ENCODE measurements at regions of chr6 and their contacts with region 1.

Region 1: DNA sequence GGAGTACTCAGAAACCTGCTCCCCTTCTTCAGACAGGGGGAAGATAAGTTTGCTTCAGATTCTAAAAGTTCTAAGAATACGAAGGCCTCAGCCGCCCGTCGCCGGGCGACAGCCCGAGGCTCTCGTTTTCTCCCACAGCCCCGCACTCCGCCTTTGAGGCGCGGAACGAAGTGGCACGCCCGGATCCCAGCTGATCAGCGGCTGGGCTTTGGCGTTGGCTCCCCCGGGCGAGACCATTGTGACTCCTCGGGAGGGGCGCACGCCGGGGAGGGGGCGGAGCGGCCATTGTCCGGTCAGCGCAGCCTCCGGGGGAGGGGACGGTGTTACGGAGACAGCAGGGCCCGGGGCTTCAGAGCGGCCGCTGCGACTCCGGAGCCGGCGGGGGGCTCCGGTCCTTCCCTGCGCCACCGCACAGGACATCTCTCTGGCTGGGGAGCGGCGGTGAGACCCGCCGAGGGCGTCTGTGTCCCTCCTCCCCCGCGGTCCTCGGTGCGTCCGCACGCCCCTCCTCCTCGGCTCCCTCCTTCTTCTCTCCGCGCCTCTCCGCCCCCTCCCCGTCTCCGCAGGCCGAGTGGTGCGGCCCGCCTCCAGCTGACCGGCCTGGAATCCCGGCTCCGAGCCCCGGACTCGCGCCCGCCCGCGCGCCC is at the start of gene ZFAND3:
- DNase-seq: peak; percentile 87 to 96 (median 95)
- ATAC-seq: peak; percentile 90
- H3K4me3 ChIP-seq: peak within 1 kb of the TSS; percentile 85
- H3K4me3 Mint-ChIP-seq: peak within 1 kb of the TSS; percentile 90 to 100 (median 96)
- H3K27ac ChIP-seq: peak within 1 kb of the TSS; percentile 93
- H3K27ac Mint-ChIP-seq: peak within 1 kb of the TSS; percentile 94 to 99 (median 98)
- H3K4me1 ChIP-seq: peaks cover 30 to 31% of the 10 kb centered on the region in 2 donors
- H3K4me1 Mint-ChIP-seq: peaks cover 39 to 66% (median 55%) of the 10 kb centered on the region in 7 donors
- H3K27me3 ChIP-seq: no peaks in the 10 kb centered on the region
- H3K27me3 Mint-ChIP-seq: peaks cover 0 to 29% (median 0%) of the 10 kb centered on the region in 5 donors
- total RNA-seq, gene ZFAND3: 31.7 to 55.0 (median 42.5) TPM

Region 2: DNA sequence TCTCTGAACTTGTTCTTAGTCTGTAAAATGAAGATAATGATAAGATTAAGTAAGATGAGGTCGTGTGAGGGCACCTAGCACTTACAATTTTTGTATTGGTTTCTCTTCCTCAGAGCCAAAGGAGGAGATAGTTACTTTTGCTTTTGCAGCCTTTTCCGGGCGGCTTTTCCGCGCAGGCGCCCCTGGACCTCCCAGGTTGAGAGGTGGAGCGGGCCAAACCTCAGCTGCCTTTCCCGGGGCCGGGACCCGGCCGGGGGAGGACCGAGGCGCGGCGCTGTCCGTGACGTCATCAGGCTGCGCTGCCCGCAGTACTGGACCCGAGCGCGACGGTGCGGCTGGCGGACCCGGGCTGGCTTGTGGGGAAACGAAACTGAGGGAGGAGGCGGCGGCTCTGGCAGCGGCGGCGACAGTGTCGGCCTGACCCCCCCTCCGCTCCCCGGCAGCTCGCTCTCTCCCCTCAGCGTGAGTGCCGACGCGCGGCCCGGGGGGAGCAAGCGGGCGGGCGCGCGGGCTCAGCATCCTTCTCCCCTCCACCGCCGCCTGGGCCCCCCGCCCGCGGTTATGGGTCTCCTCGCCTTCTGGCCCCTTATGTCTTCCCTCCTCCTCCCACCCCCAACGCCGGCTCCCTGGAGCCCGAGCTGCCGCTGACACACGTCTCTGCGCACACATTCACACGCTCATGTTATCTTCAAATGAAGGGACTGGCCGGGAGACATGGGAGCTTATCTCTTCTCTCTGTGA is 386.2 kb before region 1 on chr6 and contains the start of gene CMTR1:
- CTCF ChIA-PET with region 1: no interaction called
- POLR2A ChIA-PET with region 1: interaction called, 4 read pairs
- intact Hi-C with region 1: loop called (anchors 1 kb)
- DNase-seq: peak; percentile 94 to 99 (median 95)
- ATAC-seq: peak; percentile 96
- H3K4me3 ChIP-seq: peak within 1 kb of the TSS; percentile 64
- H3K4me3 Mint-ChIP-seq: peak within 1 kb of the TSS; percentile 83 to 96 (median 94)
- H3K27ac ChIP-seq: peak within 1 kb of the TSS; percentile 94
- H3K27ac Mint-ChIP-seq: peak within 1 kb of the TSS; percentile 92 to 97 (median 96)
- H3K4me1 ChIP-seq: peaks cover 12 to 25% of the 10 kb centered on the region in 2 donors
- H3K4me1 Mint-ChIP-seq: peaks cover 24 to 55% (median 47%) of the 10 kb centered on the region in 7 donors
- H3K27me3 ChIP-seq: no peaks in the 10 kb centered on the region
- H3K27me3 Mint-ChIP-seq: peaks cover 2 to 9% (median 8%) of the 10 kb centered on the region in 5 donors
- total RNA-seq, gene CMTR1: 70.0 to 89.4 (median 71.8) TPM

Region 3: GRCh38 chr6:37456816-37457560 is 362.3 kb before region 1 on chr6:
- CTCF ChIA-PET with region 1: no interaction called
- POLR2A ChIA-PET with region 1: no interaction called
- intact Hi-C with region 1: no loop called
- DNase-seq: no peak
- ATAC-seq: no peak
- H3K4me3 ChIP-seq: no peak overlapping the region
- H3K4me3 Mint-ChIP-seq: no peak overlapping the region
- H3K27ac ChIP-seq: no peak overlapping the region
- H3K27ac Mint-ChIP-seq: peak overlapping the region in 4 of 9 donors; percentile 32 to 63 (median 44)
- H3K4me1 ChIP-seq: no peaks in the 10 kb centered on the region
- H3K4me1 Mint-ChIP-seq: peaks cover 0 to 11% (median 3%) of the 10 kb centered on the region in 7 donors
- H3K27me3 ChIP-seq: no peaks in the 10 kb centered on the region
- H3K27me3 Mint-ChIP-seq: no peaks in the 10 kb centered on the region

Region 4: GRCh38 chr6:37783856-37784584 is 35.3 kb before region 1 on chr6:
- CTCF ChIA-PET with region 1: no interaction called
- POLR2A ChIA-PET with region 1: interaction called, 12 read pairs
- intact Hi-C with region 1: no loop called
- DNase-seq: peak in 1 of 9 donors; percentile 12
- ATAC-seq: peak; percentile 55
- H3K4me3 ChIP-seq: peak overlapping the region; percentile 65
- H3K4me3 Mint-ChIP-seq: peak overlapping the region; percentile 72 to 91 (median 82)
- H3K27ac ChIP-seq: no peak overlapping the region
- H3K27ac Mint-ChIP-seq: no peak overlapping the region
- H3K4me1 ChIP-seq: peaks cover 7 to 15% of the 10 kb centered on the region in 2 donors
- H3K4me1 Mint-ChIP-seq: peaks cover 16 to 26% (median 18%) of the 10 kb centered on the region in 7 donors
- H3K27me3 ChIP-seq: peaks cover 3 to 6% of the 10 kb centered on the region in 2 donors
- H3K27me3 Mint-ChIP-seq: peaks cover 21 to 47% (median 32%) of the 10 kb centered on the region in 5 donors

Region 5: DNA sequence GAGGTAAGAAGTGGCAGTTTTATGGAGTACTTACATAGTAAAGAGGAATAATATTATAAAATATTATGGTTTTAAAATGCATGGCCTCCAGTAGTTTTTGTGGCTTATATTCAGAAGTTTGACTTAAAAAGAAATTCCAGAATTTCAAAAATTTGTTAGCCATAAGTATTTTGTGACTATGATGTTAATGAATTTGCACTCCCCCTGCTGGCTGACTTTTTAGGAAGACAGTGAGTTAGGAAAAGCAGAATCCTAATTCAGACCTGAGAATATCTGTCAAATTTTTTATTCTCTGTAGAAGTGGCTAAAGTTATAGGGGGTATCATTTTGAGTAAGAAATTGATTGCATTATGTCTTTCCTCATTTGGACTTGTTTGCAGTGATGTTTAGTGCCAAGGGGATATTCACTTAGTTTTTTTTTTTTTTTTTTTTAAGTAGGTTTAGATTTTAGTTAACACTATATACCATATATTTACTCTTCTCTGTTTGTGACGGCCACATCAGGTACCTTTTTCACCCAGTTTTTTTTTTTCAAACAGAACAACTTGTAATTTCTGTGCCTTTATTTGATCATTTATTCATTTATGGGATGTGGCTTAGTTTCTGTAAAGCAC is 41.0 kb after region 1 on chr6:
- CTCF ChIA-PET with region 1: interaction called, 3 read pairs
- POLR2A ChIA-PET with region 1: interaction called, 3 read pairs
- intact Hi-C with region 1: loop called in 1 of 2 experiments (anchors 2 kb)
- DNase-seq: peak in 3 of 9 donors; percentile 10 to 24 (median 15)
- ATAC-seq: no peak
- H3K4me3 ChIP-seq: no peak overlapping the region
- H3K4me3 Mint-ChIP-seq: no peak overlapping the region
- H3K27ac ChIP-seq: no peak overlapping the region
- H3K27ac Mint-ChIP-seq: no peak overlapping the region
- H3K4me1 ChIP-seq: peaks cover 2 to 16% of the 10 kb centered on the region in 2 donors
- H3K4me1 Mint-ChIP-seq: peaks cover 33 to 86% (median 58%) of the 10 kb centered on the region in 7 donors
- H3K27me3 ChIP-seq: no peaks in the 10 kb centered on the region
- H3K27me3 Mint-ChIP-seq: no peaks in the 10 kb centered on the region

Region 6: GRCh38 chr6:38370653-38371601 is 551.6 kb after region 1 on chr6:
- CTCF ChIA-PET with region 1: no interaction called
- POLR2A ChIA-PET with region 1: no interaction called
- intact Hi-C with region 1: no loop called
- DNase-seq: no peak
- ATAC-seq: no peak
- H3K4me3 ChIP-seq: no peak overlapping the region
- H3K4me3 Mint-ChIP-seq: no peak overlapping the region
- H3K27ac ChIP-seq: no peak overlapping the region
- H3K27ac Mint-ChIP-seq: no peak overlapping the region
- H3K4me1 ChIP-seq: no peaks in the 10 kb centered on the region
- H3K4me1 Mint-ChIP-seq: peaks cover 0 to 14% (median 9%) of the 10 kb centered on the region in 7 donors
- H3K27me3 ChIP-seq: no peaks in the 10 kb centered on the region
- H3K27me3 Mint-ChIP-seq: no peaks in the 10 kb centered on the region

Region 7: DNA sequence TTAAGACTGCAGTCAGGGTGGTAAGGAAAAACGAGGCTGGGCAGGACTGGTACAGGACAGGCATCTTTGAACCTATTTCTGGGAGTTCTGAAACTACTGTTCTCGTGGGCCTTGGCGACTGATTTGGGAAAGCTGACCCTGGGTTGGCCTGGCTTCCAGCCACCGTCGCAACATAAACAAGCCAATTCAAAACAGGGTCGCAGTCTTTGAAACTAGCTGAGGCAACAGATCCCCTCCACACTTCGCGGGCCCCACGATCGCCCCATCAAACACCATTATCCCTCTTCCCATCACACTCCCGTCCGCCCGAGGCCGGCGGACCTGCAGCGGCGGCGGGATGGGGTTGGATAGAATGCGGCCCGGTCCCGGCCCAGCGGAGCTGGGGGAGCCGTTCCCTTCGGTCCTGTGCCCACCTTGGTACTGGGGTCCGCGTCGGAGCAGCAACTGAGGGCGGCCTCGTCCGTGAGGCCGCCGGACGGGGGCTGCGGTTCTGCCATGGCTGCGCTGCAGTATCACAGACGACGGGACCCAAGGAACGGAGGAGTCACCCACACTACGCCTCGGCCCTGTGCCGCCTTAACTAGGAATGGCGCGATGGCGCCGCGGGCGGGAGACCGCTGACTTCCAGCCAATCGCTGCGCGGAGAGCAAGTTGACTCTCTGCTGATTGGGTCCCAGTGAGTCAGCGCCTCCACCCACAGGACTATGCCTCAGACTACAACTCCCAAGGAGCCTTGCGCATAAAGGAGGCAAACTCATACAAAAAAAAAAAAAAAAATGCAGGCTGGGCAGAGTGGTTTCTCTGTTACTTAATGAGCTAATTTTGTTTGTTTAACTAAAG is 883.5 kb after region 1 on chr6 and contains the start of gene GLO1:
- CTCF ChIA-PET with region 1: no interaction called
- POLR2A ChIA-PET with region 1: interaction called, 3 read pairs
- intact Hi-C with region 1: loop called (anchors 1 to 2 kb)
- DNase-seq: peak; percentile 84 to 96 (median 94)
- ATAC-seq: peak; percentile 100
- H3K4me3 ChIP-seq: peak within 1 kb of the TSS; percentile 81
- H3K4me3 Mint-ChIP-seq: peak within 1 kb of the TSS; percentile 77 to 99 (median 90)
- H3K27ac ChIP-seq: peak within 1 kb of the TSS; percentile 81
- H3K27ac Mint-ChIP-seq: peak within 1 kb of the TSS; percentile 76 to 95 (median 91)
- H3K4me1 ChIP-seq: peaks cover 0 to 4% of the 10 kb centered on the region in 2 donors
- H3K4me1 Mint-ChIP-seq: peaks cover 8 to 50% (median 28%) of the 10 kb centered on the region in 7 donors
- H3K27me3 ChIP-seq: no peaks in the 10 kb centered on the region
- H3K27me3 Mint-ChIP-seq: peaks cover 13 to 18% (median 16%) of the 10 kb centered on the region in 5 donors
- total RNA-seq, gene GLO1: 16.0 to 103 (median 22.3) TPM

Measured in naive thymus-derived CD4-positive, alpha-beta T cell (primary cell).